ENCODE measurements at regions of chr3 and their contacts with region 1.

Region 1: GRCh38 chr3:154252759-154253638 is 71.3 kb downstream of the DHX36 start:
- DNase-seq: peak; percentile 97
- H3K4me3 ChIP-seq: peak overlapping the region in 3 of 4 donors; percentile 11 to 14 (median 11)
- H3K27ac ChIP-seq: peak overlapping the region in 3 of 4 donors; percentile 24 to 38 (median 37)
- H3K4me1 ChIP-seq: peaks cover 0 to 37% (median 32%) of the 10 kb centered on the region in 4 donors
- H3K27me3 ChIP-seq: no peaks in the 10 kb centered on the region
- CTCF ChIP-seq: peak; percentile 81 to 92 (median 89)
- EP300 ChIP-seq: no peak
- POLR2A ChIP-seq: no peak

Region 2: DNA sequence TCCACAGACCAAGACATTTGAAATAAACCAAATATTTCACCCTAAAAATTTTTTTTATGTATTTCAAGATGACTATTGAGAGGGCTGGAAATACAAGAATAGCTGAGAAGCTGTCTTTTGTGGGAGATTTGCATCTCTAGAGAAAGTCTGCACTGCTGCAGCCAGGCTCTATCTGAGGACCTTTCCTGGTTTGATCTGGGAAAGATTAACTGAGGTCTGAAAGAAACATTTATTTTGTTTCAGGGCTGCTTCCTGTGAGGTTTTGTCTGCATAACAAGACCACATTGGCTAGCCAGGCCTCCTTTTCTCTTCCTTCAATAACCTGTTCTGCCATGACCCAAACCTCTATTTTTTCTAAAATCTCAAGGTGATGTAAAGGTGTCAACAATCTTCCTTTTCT is 249.3 kb before region 1 on chr3:
- intact Hi-C with region 1: loop called (anchors 5 kb)
- DNase-seq: no peak
- H3K4me3 ChIP-seq: no peak overlapping the region
- H3K27ac ChIP-seq: no peak overlapping the region
- H3K4me1 ChIP-seq: no peaks in the 10 kb centered on the region
- H3K27me3 ChIP-seq: no peaks in the 10 kb centered on the region
- CTCF ChIP-seq: no peak
- EP300 ChIP-seq: no peak
- POLR2A ChIP-seq: no peak

Region 3: DNA sequence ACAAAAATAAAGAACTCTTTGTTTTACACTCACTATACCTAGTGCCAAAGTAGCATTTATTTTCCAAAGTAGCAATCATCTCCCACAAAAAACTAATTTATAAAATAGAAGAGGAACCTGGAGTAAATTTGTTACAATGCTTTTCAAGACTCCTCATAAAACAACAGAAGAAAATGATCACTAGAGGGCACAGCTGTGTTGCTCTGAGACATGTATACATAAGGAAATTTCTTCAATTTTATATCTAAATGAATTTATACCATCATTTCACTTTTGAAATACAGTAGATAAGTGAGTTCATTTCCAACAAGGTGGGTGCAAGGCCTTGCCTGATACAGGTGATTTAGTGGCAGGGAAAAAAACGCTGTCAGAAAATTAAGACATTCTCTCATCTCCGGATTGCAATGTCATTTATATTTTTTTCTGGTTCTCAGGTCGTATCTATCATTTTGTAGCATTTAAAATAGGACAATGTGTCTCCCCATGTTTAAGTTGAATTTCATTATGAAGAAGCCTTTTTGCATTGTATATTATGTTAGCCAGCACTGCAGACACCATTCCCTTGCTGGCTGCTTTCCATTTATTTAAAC is 157.1 kb before region 1 on chr3:
- intact Hi-C with region 1: loop called (anchors 5 kb)
- DNase-seq: no peak
- H3K4me3 ChIP-seq: no peak overlapping the region
- H3K27ac ChIP-seq: peak overlapping the region in 1 of 4 donors; percentile 15
- H3K4me1 ChIP-seq: peaks cover 0 to 38% (median 33%) of the 10 kb centered on the region in 4 donors
- H3K27me3 ChIP-seq: no peaks in the 10 kb centered on the region
- CTCF ChIP-seq: peak; percentile 39 to 56 (median 51)
- EP300 ChIP-seq: no peak
- POLR2A ChIP-seq: no peak

Region 4: DNA sequence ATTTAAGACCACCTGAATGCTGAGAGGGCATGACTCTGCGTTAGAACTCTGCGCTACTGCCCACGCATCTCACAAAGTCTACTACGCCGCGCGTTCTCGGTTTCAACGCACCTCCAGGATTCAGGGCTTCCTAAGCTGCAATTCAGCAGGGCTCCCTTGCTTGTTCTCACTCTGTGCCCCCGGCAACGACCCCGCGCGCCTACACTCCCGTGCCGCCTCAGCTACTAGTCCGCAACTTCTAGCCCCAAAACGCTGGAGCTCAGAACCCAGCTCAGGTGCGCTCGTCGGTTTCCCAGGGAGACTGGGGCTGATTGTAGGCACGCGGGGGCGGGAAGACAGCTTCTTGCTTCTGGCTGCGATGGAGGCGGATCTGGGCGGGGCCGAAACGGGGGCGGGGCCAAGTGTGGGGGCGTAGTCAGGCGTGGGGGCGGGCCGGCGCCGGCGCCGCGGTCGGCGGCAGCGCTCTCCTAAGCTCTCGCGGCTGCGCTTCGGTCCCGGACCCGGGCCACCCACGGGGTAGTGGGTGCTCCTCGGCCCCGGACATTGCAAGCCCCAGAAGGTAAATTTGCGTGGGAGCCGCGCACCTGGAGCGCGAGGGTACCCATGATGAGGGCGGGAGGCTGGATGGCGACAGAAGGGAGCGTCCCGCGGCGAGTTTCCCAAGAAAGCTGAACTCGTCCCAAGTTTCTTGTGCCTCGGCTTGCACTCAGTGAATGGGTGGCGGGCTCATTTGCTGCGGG is 131.9 kb before region 1 on chr3 and contains the start of gene ARHGEF26:
- intact Hi-C with region 1: loop called (anchors 5 kb)
- DNase-seq: peak; percentile 94
- H3K4me3 ChIP-seq: peak within 1 kb of the TSS; percentile 73 to 97 (median 90)
- H3K27ac ChIP-seq: peak within 1 kb of the TSS; percentile 81 to 91 (median 86)
- H3K4me1 ChIP-seq: peaks cover 9 to 29% (median 21%) of the 10 kb centered on the region in 4 donors
- H3K27me3 ChIP-seq: no peaks in the 10 kb centered on the region
- CTCF ChIP-seq: no peak
- EP300 ChIP-seq: no peak
- POLR2A ChIP-seq: no peak
- total RNA-seq, gene ARHGEF26: 124 to 158 (median 132) TPM